Mammary epithelial cell (primary cell): ENCODE measurements at regions of chr14 and their contacts with region 1.

Region 1: DNA sequence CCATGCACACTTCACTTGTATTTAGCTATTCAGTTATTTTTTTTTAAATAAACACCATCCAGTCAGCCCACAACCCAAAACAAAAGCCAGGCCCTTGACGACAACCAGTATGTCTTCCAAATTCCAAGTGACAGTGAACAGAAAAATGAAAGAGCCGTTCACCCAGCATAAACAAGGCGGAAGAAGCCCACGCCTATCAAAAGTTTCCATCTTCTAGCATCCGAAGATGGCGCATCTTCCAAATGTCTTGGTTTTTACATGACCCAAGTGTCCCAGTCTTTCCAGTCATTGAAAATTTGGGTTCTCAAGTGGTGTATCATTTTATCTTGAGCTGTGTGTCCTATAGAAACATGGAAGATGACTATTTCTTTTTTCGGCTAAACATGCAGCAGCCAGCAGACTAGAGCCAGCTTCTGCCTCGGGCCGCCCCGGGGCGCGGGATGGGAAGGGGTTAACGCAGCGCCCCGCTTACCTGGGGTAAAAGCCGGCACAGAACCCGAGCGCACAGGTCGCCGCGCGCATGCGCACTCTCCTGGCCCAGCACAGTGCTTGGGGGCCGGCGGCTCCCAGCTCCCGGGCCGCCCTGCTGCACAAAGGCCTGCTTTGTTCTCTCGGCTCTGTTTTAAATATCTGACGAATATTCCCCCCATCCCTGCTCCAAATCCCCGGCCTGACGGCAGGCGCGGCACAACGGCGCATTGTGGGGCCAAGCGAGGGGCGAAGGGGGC is 164.8 kb downstream of the ZFP36L1 start:
- DNase-seq: peak; percentile 52
- H3K4me3 ChIP-seq: peak overlapping the region in 1 of 3 experiments; percentile 3
- H3K27ac ChIP-seq: no peak overlapping the region
- H3K4me1 ChIP-seq: peaks cover 25% of the 10 kb centered on the region
- H3K27me3 ChIP-seq: no peaks in the 10 kb centered on the region
- CTCF ChIP-seq: no peak

Region 2: GRCh38 chr14:68577827-68578541 is 50.1 kb before region 1 on chr14:
- CTCF ChIA-PET with region 1: no interaction called
- dilution Hi-C with region 1: loop called (anchors 5 kb)
- in situ Hi-C with region 1: no loop called
- intact Hi-C with region 1: no loop called
- DNase-seq: peak; percentile 96
- H3K4me3 ChIP-seq: no peak overlapping the region
- H3K27ac ChIP-seq: peak overlapping the region; percentile 82
- H3K4me1 ChIP-seq: peaks cover 40% of the 10 kb centered on the region
- H3K27me3 ChIP-seq: no peaks in the 10 kb centered on the region
- CTCF ChIP-seq: no peak

Region 3: GRCh38 chr14:68663385-68664076 is 35.5 kb after region 1 on chr14:
- CTCF ChIA-PET with region 1: no interaction called
- dilution Hi-C with region 1: loop called (anchors 5 kb)
- in situ Hi-C with region 1: no loop called
- intact Hi-C with region 1: no loop called
- DNase-seq: peak; percentile 73
- H3K4me3 ChIP-seq: no peak overlapping the region
- H3K27ac ChIP-seq: no peak overlapping the region
- H3K4me1 ChIP-seq: no peaks in the 10 kb centered on the region
- H3K27me3 ChIP-seq: no peaks in the 10 kb centered on the region
- CTCF ChIP-seq: no peak

Region 4: GRCh38 chr14:68807148-68807600 is 179.1 kb after region 1 on chr14:
- CTCF ChIA-PET with region 1: no interaction called
- dilution Hi-C with region 1: no loop called
- in situ Hi-C with region 1: no loop called
- intact Hi-C with region 1: no loop called
- DNase-seq: no peak
- H3K4me3 ChIP-seq: no peak overlapping the region
- H3K27ac ChIP-seq: no peak overlapping the region
- H3K4me1 ChIP-seq: peaks cover 11% of the 10 kb centered on the region
- H3K27me3 ChIP-seq: no peaks in the 10 kb centered on the region
- CTCF ChIP-seq: no peak